ENCODE measurements at regions of chr16 and their contacts with region 1.

Region 1: GRCh38 chr16:88811769-88812512 is at the start of gene APRT:
- DNase-seq: peak; percentile 92 to 98 (median 95)
- ATAC-seq: peak; percentile 84
- H3K4me3 ChIP-seq: peak within 1 kb of the TSS; percentile 64
- H3K27ac ChIP-seq: peak within 1 kb of the TSS; percentile 94
- H3K4me1 ChIP-seq: peaks cover 14 to 82% of the 10 kb centered on the region in 2 experiments
- H3K27me3 ChIP-seq: no peaks in the 10 kb centered on the region
- CTCF ChIP-seq: peak; percentile 67 to 89 (median 84)
- EP300 ChIP-seq: peak; percentile 9; the same call in 1 of the 2 replicates
- POLR2A ChIP-seq: peak; percentile 80
- RAD21 ChIP-seq: peak; percentile 93 to 94
- polyA plus RNA-seq, gene APRT: 41.7 to 116 TPM

Region 2: GRCh38 chr16:88737298-88738150 is 74.4 kb before region 1 on chr16:
- CTCF ChIA-PET with region 1: interaction called, 4 read pairs
- POLR2A ChIA-PET with region 1: interaction called, 17 read pairs
- in situ Hi-C with region 1: no loop called
- intact Hi-C with region 1: no loop called
- DNase-seq: peak; percentile 92 to 97 (median 93)
- ATAC-seq: peak; percentile 97
- H3K4me3 ChIP-seq: no peak overlapping the region
- H3K27ac ChIP-seq: no peak overlapping the region
- H3K4me1 ChIP-seq: peaks cover 0 to 94% of the 10 kb centered on the region in 2 experiments; a peak in 3 of 5 replicates
- H3K27me3 ChIP-seq: no peaks in the 10 kb centered on the region
- CTCF ChIP-seq: peak; percentile 97 to 99 (median 99)
- EP300 ChIP-seq: peak; percentile 35; the same call in 1 of the 2 replicates
- POLR2A ChIP-seq: peak; percentile 47
- RAD21 ChIP-seq: peak; percentile 93 to 94

Region 3: DNA sequence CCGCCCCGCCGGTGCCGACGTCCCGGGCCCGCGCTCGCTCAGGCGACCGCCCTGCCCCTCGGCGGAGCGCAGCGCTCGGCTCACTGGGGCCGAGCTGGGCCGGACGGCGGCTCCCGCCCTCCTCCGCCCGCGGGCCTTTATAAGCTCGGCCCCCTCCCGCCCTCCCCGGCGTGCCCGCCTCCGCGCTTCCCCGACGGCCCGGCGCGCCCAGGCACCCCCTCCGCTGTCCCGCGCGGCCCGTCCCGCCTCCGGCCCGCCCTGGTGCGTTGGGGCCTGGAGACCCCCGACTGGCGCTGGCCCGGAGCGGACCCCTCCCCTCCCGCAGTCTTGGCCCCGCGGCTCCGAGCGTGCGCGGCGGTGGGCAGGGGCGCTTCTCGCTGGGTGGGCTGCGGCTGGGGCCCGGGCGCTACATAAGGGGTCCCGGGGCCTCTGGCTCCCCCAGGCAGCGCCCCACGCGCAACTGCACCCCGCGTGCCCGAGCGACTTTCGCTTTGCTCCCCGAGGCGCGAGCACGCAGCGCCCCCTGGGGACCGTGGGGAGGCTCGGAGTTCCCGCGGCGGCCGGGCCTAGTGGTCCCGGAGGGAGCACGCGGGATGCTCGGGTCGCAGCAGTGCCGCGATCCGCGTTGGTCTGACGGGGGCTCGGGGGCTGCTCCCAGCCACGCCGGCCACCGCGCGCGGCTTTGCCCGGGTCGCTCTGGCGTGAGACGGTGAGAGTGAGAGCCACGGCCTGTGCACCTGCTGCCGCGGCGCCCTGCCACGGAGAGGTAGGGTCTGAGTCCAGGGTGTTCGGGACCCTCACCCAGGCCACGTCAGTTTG is 26.6 kb before region 1 on chr16 and contains the start of gene PIEZO1:
- CTCF ChIA-PET with region 1: no interaction called
- POLR2A ChIA-PET with region 1: interaction called, 47 read pairs
- in situ Hi-C with region 1: no loop called
- intact Hi-C with region 1: no loop called
- DNase-seq: peak; percentile 84 to 93 (median 88)
- ATAC-seq: peak; percentile 57
- H3K4me3 ChIP-seq: peak within 1 kb of the TSS; percentile 70
- H3K27ac ChIP-seq: peak within 1 kb of the TSS; percentile 93
- H3K4me1 ChIP-seq: peaks cover 29 to 70% of the 10 kb centered on the region in 2 experiments
- H3K27me3 ChIP-seq: no peaks in the 10 kb centered on the region
- CTCF ChIP-seq: peak; percentile 90 to 97 (median 96)
- EP300 ChIP-seq: no peak; the same call in 1 of the 2 replicates
- POLR2A ChIP-seq: no peak
- RAD21 ChIP-seq: peak; percentile 98
- polyA plus RNA-seq, gene PIEZO1: 3.6 to 9.6 TPM

Region 4: DNA sequence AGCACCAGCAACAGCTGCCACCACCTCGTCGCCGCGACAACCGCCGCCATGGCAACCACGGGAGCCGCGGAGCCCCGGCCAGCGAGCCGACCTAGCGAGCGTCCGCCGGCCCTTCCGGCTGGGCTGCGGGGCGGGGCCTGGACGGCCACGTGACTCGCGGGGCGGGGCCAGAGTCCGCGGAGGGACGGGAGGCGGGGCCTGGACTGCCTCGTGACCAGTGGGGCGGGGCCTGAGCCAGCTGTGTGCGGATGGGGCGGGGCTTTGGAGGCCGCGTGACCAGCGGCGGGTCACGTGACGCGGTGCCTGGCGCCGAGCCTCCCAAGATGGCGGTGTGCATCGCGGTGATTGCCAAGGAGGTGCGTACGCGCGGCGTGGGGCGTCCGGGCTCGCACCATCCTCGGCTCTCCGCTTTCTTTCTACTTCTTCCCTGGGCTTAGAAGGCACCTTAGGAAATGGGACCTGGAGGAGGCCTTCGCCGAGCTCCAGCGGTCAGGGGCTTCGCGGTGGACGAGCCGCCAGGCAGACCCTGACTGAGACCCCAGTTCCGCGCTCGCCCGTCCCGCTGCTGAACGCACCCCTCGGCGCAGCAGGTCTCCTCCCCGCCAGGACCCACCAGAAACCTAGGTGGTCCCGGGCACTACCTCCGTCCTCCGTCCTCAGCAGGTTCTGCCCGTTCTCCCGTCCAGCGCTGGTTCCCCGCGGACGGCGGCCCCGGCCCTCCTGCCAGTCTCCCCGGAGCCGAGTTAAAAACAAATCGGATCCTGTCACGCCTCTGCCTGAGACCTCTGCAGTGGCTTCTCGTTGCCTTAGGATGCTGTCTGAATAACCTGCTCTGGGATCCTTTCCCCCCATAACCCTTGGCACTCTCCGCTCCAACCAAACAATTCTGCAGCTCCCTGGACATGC is 45.1 kb after region 1 on chr16 and contains the starts of genes GALNS and TRAPPC2L:
- CTCF ChIA-PET with region 1: interaction called, 4 read pairs
- POLR2A ChIA-PET with region 1: interaction called, 3 read pairs
- in situ Hi-C with region 1: no loop called
- intact Hi-C with region 1: loop called (anchors 2 kb)
- DNase-seq: peak; percentile 96 to 99 (median 99)
- ATAC-seq: peak; percentile 95
- H3K4me3 ChIP-seq: peak within 1 kb of the TSS; percentile 69
- H3K27ac ChIP-seq: peak within 1 kb of the TSS; percentile 31
- H3K4me1 ChIP-seq: peaks cover 8 to 46% of the 10 kb centered on the region in 2 experiments
- H3K27me3 ChIP-seq: no peaks in the 10 kb centered on the region
- CTCF ChIP-seq: no peak
- EP300 ChIP-seq: no peak
- POLR2A ChIP-seq: peak; percentile 78
- RAD21 ChIP-seq: no peak
- polyA plus RNA-seq, gene GALNS: 0.38 to 0.63 TPM
- polyA plus RNA-seq, gene TRAPPC2L: 345 to 398 TPM

Region 5: GRCh38 chr16:89009311-89010209 is 197.6 kb after region 1 on chr16:
- CTCF ChIA-PET with region 1: no interaction called
- POLR2A ChIA-PET with region 1: no interaction called
- in situ Hi-C with region 1: no loop called
- intact Hi-C with region 1: loop called (anchors 10 kb)
- DNase-seq: peak in 3 of 4 experiments; percentile 68 to 77 (median 71)
- ATAC-seq: peak; percentile 55
- H3K4me3 ChIP-seq: no peak overlapping the region
- H3K27ac ChIP-seq: no peak overlapping the region
- H3K4me1 ChIP-seq: peaks cover 2 to 38% of the 10 kb centered on the region in 2 experiments; a peak in 4 of 5 replicates
- H3K27me3 ChIP-seq: peaks cover 0 to 16% of the 10 kb centered on the region in 2 experiments; a peak in 3 of 5 replicates
- CTCF ChIP-seq: no peak
- EP300 ChIP-seq: no peak
- POLR2A ChIP-seq: no peak
- RAD21 ChIP-seq: 0 out of 4 replicates have a peak, but pooled peaks of 1 of the 2 experiments have one; percentile 8

Region 6: DNA sequence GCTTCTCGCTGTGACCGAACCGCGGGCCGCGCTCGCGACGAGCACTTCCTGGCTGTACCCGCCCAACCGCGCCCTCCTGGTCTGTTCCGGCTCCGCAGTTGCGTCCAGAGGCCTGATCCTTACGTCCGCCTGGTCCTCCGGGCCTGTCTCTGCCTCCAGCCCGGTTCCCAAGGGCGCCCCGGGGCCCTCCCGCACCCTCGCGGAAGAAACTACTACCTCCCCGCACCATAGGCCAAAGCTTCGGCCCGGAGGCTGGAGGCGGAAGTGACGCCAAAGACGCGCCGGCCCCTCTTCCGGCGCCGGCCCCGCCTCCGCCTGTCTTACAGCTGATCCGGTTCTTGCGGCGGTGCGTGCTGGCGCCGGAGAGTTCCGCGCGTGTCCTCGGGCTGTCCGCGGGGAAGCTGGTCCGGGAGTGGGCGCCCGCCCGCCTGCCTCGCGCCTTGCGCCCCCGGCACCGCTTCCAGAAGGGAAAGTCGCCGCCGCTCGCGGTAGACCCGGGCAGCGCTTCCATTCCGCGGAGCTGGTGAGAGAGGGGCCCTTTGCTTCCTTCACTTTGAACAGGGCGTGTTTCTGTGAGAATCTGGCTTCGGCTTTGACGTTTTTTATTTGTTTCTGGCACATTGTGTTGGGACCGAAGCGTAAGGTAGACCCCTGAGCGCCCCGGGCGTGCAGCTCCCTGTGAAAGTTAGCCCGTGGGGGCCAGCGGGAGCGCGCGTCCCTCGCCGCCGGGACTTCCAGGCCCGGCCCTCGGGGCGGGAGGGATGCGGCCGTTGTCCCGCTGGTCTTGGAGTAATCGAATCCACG is 405.6 kb after region 1 on chr16 and contains the start of gene ZNF778:
- CTCF ChIA-PET with region 1: no interaction called
- POLR2A ChIA-PET with region 1: interaction called, 3 read pairs
- in situ Hi-C with region 1: loop called (anchors 10 kb)
- intact Hi-C with region 1: loop called (anchors 2 kb)
- DNase-seq: peak; percentile 88 to 92 (median 88)
- ATAC-seq: peak; percentile 80
- H3K4me3 ChIP-seq: peak within 1 kb of the TSS; percentile 90
- H3K27ac ChIP-seq: peak within 1 kb of the TSS; percentile 78
- H3K4me1 ChIP-seq: peaks cover 20 to 31% of the 10 kb centered on the region in 2 experiments; a peak in 4 of 5 replicates
- H3K27me3 ChIP-seq: no peaks in the 10 kb centered on the region
- CTCF ChIP-seq: peak in 1 of 3 experiments; percentile 2; a peak in 1 of 6 replicates
- EP300 ChIP-seq: no peak
- POLR2A ChIP-seq: peak; percentile 94
- RAD21 ChIP-seq: no peak
- polyA plus RNA-seq, gene ZNF778: 0.70 to 0.80 TPM

Measured in K562 (cell line).